ENCODE measurements at regions of chr11 and their contacts with region 1.

Region 1: GRCh38 chr11:72160319-72160718 is 24.8 kb downstream of the FOLR3 start:
- DNase-seq: no peak
- H3K4me3 Mint-ChIP-seq: no peak overlapping the region
- H3K27ac Mint-ChIP-seq: no peak overlapping the region
- H3K4me1 Mint-ChIP-seq: no peaks in the 10 kb centered on the region
- H3K27me3 Mint-ChIP-seq: peaks cover 5% of the 10 kb centered on the region

Region 2: GRCh38 chr11:71302911-71303310 is 857.4 kb before region 1 on chr11:
- CTCF ChIA-PET with region 1: no interaction called
- intact Hi-C with region 1: no loop called
- DNase-seq: no peak
- H3K4me3 Mint-ChIP-seq: no peak overlapping the region
- H3K27ac Mint-ChIP-seq: no peak overlapping the region
- H3K4me1 Mint-ChIP-seq: no peaks in the 10 kb centered on the region
- H3K27me3 Mint-ChIP-seq: peaks cover 6% of the 10 kb centered on the region

Region 3: DNA sequence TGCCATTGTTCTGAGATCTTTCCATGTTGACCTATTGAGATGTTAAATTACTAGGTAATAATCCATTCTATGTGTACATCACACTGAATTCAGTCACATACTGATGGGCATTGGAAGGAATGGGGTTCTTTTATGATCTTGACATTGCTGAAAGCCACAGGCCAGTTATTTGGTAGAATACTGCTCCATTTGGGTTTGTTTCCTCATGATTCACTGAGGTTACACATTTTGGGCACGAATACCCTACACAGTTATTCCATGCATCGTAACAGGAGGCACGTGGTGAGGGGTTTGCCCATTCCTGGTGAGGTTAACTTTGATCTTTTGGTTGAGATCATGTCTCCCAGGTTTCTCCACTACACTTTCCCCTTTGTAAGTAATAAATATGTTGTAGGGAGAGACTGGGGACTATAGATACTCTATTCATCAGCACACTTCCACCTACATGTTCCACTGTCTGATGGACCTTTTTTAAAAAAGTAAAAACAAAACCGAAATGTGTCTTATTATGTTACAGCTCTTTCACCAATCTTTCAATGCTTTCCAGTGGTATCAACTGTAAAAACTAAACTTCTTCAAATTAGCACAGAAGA is 19.6 kb after region 1 on chr11:
- CTCF ChIA-PET with region 1: interaction called, 10 read pairs
- intact Hi-C with region 1: no loop called
- DNase-seq: no peak
- H3K4me3 Mint-ChIP-seq: no peak overlapping the region
- H3K27ac Mint-ChIP-seq: no peak overlapping the region
- H3K4me1 Mint-ChIP-seq: peaks cover 7% of the 10 kb centered on the region
- H3K27me3 Mint-ChIP-seq: no peaks in the 10 kb centered on the region